ENCODE measurements at regions of chr14 and their contacts with region 1.

Region 1: DNA sequence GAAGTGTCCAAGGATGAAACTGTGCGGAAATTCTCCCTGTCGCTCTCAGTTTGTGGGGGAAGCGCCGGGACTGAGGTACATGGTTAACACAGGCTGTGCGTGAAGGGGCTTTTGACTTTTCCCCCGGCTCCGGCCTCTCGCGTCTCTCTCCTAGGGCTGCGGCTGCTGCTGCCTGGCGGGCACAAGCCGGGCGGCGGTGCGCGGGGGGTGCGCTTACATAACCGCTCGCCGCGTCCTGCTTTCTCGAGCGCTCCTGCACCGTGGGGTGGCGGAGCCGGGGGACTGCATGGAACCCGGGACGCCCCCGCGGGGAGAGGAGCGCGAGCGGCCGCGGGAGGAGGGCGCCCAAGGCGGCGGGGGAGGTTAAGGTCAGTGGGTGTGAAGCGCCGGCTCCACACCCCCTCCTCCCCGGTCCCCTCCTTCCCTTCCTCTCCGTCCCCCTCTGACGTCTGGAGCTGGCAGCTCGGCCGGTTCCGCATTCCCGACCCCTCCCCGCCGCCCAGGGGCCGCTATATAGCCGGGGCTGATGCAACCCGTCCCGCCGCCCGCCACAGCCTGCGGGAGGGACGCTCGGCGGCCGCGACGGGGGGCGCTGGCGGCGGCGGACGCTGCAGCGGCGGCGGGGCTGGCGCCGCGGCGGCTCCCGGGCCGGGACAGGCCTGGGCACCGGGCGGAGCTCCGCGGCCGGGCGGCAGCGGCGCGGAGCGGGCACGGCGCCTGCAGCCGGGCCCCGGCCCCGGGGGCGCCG is at the start of gene JDP2:
- DNase-seq: peak; percentile 91
- H3K4me3 ChIP-seq: peak within 1 kb of the TSS; percentile 70
- H3K27ac ChIP-seq: peak within 1 kb of the TSS; percentile 73
- H3K4me1 ChIP-seq: peaks cover 11% of the 10 kb centered on the region
- H3K27me3 ChIP-seq: no peaks in the 10 kb centered on the region
- CTCF ChIP-seq: no peak
- total RNA-seq, gene JDP2: 19.4 to 37.1 TPM

Region 2: GRCh38 chr14:74712499-74713394 is 714.9 kb before region 1 on chr14 and contains the starts of genes AREL1 and FCF1:
- intact Hi-C with region 1: no loop called
- DNase-seq: peak; percentile 92
- H3K4me3 ChIP-seq: peak within 1 kb of the TSS; percentile 56
- H3K27ac ChIP-seq: peak within 1 kb of the TSS; percentile 52
- H3K4me1 ChIP-seq: peaks cover 17% of the 10 kb centered on the region
- H3K27me3 ChIP-seq: no peaks in the 10 kb centered on the region
- CTCF ChIP-seq: no peak
- total RNA-seq, gene AREL1: 37.2 to 37.5 TPM
- total RNA-seq, gene FCF1: 40.3 to 42.2 TPM

Region 3: GRCh38 chr14:75476274-75476995 is 48.8 kb after region 1 on chr14:
- intact Hi-C with region 1: loop called (anchors 10 kb)
- DNase-seq: no peak
- H3K4me3 ChIP-seq: no peak overlapping the region
- H3K27ac ChIP-seq: peak overlapping the region; percentile 6
- H3K4me1 ChIP-seq: no peaks in the 10 kb centered on the region
- H3K27me3 ChIP-seq: no peaks in the 10 kb centered on the region
- CTCF ChIP-seq: no peak

Region 4: GRCh38 chr14:75549169-75549568 is 121.5 kb after region 1 on chr14:
- intact Hi-C with region 1: no loop called
- DNase-seq: no peak
- H3K4me3 ChIP-seq: no peak overlapping the region
- H3K27ac ChIP-seq: no peak overlapping the region
- H3K4me1 ChIP-seq: no peaks in the 10 kb centered on the region
- H3K27me3 ChIP-seq: no peaks in the 10 kb centered on the region
- CTCF ChIP-seq: no peak

Region 5: GRCh38 chr14:76168531-76168930 is 740.9 kb after region 1 on chr14:
- intact Hi-C with region 1: no loop called
- DNase-seq: no peak
- H3K4me3 ChIP-seq: no peak overlapping the region
- H3K27ac ChIP-seq: no peak overlapping the region
- H3K4me1 ChIP-seq: no peaks in the 10 kb centered on the region
- H3K27me3 ChIP-seq: no peaks in the 10 kb centered on the region
- CTCF ChIP-seq: no peak